PC-3 (cell line): ENCODE measurements at regions of chr1 and their contacts with region 1.

Region 1: GRCh38 chr1:51192213-51192843 is 43.7 kb upstream of the RNF11 start:
- DNase-seq: peak; percentile 89
- ATAC-seq: peak; percentile 68
- H3K4me3 ChIP-seq: no peak overlapping the region
- H3K27ac ChIP-seq: no peak overlapping the region
- H3K4me1 ChIP-seq: peaks cover 11% of the 10 kb centered on the region; the same call in 1 of the 2 replicates
- H3K27me3 ChIP-seq: no peaks in the 10 kb centered on the region
- CTCF ChIP-seq: peak; percentile 78

Region 2: GRCh38 chr1:50929376-50929958 is 262.9 kb before region 1 on chr1:
- CTCF ChIA-PET with region 1: no interaction called
- POLR2A ChIA-PET with region 1: no interaction called
- intact Hi-C with region 1: loop called (anchors 1 kb)
- DNase-seq: peak; percentile 64
- ATAC-seq: no peak
- H3K4me3 ChIP-seq: no peak overlapping the region
- H3K27ac ChIP-seq: no peak overlapping the region
- H3K4me1 ChIP-seq: no peaks in the 10 kb centered on the region
- H3K27me3 ChIP-seq: no peaks in the 10 kb centered on the region
- CTCF ChIP-seq: peak; percentile 78

Region 3: GRCh38 chr1:51058858-51059257 is 133.5 kb before region 1 on chr1:
- CTCF ChIA-PET with region 1: no interaction called
- POLR2A ChIA-PET with region 1: no interaction called
- intact Hi-C with region 1: no loop called
- DNase-seq: peak; percentile 56
- ATAC-seq: peak; percentile 23; the same call in 1 of the 2 replicates
- H3K4me3 ChIP-seq: no peak overlapping the region
- H3K27ac ChIP-seq: no peak overlapping the region
- H3K4me1 ChIP-seq: peaks cover 31% of the 10 kb centered on the region
- H3K27me3 ChIP-seq: no peaks in the 10 kb centered on the region
- CTCF ChIP-seq: peak; percentile 63; the same call in 1 of the 2 replicates

Region 4: DNA sequence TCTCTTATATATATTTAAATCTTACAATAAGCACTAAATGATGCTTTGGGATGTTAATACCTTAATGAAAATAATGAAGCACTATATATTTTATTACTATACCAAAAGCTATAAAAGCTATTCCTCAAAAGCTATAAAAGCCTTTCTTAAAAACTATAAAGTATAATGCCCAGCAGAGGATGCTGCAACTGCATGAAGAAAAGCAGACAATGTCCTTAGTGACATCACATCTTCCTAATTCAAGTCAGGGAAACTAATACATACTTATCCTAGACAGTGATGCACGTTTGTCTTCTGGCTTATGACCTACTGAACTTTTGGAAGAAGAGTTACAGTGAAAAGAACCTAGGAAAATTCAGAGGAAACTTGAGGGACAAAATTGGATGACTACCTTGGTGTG is 103.8 kb before region 1 on chr1:
- CTCF ChIA-PET with region 1: interaction called, 17 read pairs
- POLR2A ChIA-PET with region 1: no interaction called
- intact Hi-C with region 1: loop called (anchors 1 kb)
- DNase-seq: peak; percentile 65
- ATAC-seq: peak; percentile 31; the same call in 1 of the 2 replicates
- H3K4me3 ChIP-seq: no peak overlapping the region
- H3K27ac ChIP-seq: no peak overlapping the region
- H3K4me1 ChIP-seq: no peaks in the 10 kb centered on the region
- H3K27me3 ChIP-seq: no peaks in the 10 kb centered on the region
- CTCF ChIP-seq: peak; percentile 68

Region 5: DNA sequence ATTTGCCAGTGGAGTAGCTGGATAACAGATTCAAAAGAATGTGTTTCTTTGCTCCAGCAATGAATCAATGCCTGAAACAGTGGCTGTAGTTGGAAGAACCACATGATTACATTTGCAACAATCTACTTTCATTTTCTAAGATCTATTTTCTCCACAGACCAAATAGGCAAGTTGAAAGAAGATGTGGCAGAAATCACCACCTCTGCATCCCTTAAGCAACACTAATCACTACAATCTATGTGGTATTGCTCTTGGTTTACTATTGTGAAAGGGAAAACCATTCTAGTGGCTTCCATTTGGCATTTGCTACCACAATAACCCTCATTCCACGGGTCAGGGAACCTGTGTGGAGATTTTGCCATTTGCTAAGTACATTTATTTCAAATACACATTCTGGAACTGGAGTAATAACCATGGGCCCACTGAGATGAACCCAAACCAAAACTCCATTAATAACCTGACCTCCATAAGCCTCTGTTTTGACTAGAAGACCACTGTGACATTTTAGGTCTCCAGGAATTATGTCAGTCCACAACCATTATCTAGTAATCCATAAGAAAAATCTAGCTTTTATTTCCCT is 24.0 kb before region 1 on chr1:
- CTCF ChIA-PET with region 1: no interaction called
- POLR2A ChIA-PET with region 1: no interaction called
- intact Hi-C with region 1: no loop called
- DNase-seq: no peak
- ATAC-seq: no peak
- H3K4me3 ChIP-seq: no peak overlapping the region
- H3K27ac ChIP-seq: no peak overlapping the region
- H3K4me1 ChIP-seq: peaks cover 30% of the 10 kb centered on the region
- H3K27me3 ChIP-seq: no peaks in the 10 kb centered on the region
- CTCF ChIP-seq: no peak

Region 6: GRCh38 chr1:51235673-51236530 is 43.6 kb after region 1 on chr1 and contains the start of gene RNF11:
- CTCF ChIA-PET with region 1: interaction called, 3 read pairs
- POLR2A ChIA-PET with region 1: no interaction called
- intact Hi-C with region 1: loop called (anchors 1 kb)
- DNase-seq: peak; percentile 89
- ATAC-seq: peak; percentile 88
- H3K4me3 ChIP-seq: peak within 1 kb of the TSS; percentile 96
- H3K27ac ChIP-seq: peak within 1 kb of the TSS; percentile 25
- H3K4me1 ChIP-seq: peaks cover 23% of the 10 kb centered on the region
- H3K27me3 ChIP-seq: no peaks in the 10 kb centered on the region
- CTCF ChIP-seq: no peak
- total RNA-seq, gene RNF11: 117 and 169 TPM in 2 replicates

Region 7: DNA sequence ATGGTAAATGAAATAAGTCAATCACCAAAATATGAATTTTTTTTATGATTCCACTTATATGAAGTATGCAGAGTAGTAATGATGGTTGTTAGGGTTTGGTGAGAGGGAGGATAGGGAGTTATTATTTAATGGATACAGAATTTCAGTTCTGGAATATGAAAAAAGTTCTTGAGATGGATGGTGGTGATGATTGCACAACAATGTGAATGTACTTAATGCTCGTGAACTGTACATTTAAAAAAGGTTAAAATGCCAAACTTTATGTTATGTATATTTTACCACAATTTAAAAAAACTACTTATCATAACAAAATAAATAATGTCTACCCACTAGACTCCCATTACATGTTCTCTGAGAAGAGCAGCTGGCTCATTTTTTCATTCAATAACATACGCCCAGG is 193.4 kb after region 1 on chr1:
- CTCF ChIA-PET with region 1: no interaction called
- POLR2A ChIA-PET with region 1: no interaction called
- intact Hi-C with region 1: no loop called
- DNase-seq: no peak
- ATAC-seq: no peak
- H3K4me3 ChIP-seq: no peak overlapping the region
- H3K27ac ChIP-seq: no peak overlapping the region
- H3K4me1 ChIP-seq: no peaks in the 10 kb centered on the region
- H3K27me3 ChIP-seq: no peaks in the 10 kb centered on the region
- CTCF ChIP-seq: no peak